ENCODE measurements at regions of chr7 and their contacts with region 1.

Region 1: DNA sequence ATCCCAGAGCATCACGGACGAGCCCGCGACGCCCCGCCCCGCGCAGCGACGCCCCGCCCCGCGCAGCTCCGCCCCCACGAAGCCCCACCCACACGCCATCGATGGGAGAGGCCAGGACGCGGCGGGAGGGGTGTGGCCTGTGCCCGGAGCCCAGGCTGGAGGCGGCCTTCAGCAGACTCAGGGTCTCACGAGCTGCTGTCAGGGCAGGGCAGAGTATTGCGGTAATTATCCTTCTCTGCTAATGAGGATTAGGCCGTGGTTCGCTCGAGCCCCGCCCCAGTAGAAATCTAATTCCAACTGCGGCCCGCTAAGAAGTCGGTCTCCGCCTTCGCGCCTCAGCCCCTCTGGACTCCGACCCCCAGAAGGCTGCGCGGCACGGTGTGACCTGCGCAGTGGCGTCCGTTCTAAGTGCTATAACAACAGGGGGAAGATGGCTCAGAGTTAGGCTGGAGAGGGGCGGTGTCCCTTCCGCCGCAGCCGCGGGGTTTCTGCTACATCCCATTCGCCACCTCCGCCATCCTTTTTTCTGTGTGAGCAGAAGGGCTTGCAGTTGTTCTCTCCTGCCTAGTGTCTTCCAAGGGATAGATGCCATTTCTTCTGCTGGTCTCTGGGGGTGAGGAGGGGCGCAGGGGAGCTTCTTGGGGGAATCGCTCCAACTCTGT is 337 bp upstream of the NT5C3A start:
- DNase-seq: peak; percentile 90
- H3K4me3 Mint-ChIP-seq: peak overlapping the region; percentile 94
- H3K27ac Mint-ChIP-seq: peak overlapping the region; percentile 89
- H3K4me1 Mint-ChIP-seq: peaks cover 35% of the 10 kb centered on the region
- H3K27me3 Mint-ChIP-seq: peaks cover 2% of the 10 kb centered on the region

Region 2: DNA sequence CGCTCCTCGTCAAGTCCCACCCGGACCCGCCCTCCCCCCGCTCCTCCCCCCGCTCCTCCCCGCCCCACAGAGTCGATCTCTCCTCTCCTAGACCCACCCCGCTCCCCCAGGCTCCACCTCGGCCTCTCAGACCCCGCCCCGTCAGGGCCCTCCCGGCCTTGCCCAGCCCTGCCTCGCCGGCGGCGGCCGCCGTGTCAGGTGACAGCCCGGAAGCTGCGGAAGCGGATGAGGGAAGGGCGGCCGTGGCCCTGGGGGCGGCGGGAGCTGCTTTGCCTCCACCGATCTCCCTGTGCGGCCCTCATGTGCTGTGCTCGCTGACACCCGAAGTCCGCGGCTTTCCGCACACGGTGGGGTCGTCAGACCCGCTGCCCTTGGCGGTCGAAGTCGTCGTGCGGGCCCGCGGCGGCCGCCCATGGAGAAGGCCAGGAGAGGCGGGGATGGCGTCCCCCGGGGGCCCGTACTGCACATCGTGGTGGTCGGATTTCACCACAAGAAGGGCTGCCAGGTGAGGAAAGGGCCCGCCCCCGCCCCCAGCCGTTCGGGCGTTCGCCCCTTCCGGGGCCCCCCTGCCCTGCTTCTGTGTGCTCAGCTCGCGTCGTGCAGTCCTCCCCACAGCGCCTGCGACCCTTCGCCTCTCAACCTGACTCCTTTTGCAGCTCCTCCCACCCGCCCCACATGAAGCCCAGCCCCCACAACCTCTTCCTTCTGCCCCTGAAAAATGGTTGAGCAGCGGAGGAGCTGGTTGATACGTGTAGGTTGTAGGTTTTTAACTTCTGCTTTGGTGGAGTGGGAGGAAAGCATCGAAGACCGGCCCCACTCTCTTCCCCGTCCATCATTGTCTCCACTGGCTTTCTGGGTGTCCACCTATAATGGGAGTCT is 567.4 kb before region 1 on chr7 and contains the start of gene AVL9:
- intact Hi-C with region 1: loop called (anchors 1 kb)
- DNase-seq: peak; percentile 99
- H3K4me3 Mint-ChIP-seq: peak within 1 kb of the TSS; percentile 94
- H3K27ac Mint-ChIP-seq: peak within 1 kb of the TSS; percentile 95
- H3K4me1 Mint-ChIP-seq: peaks cover 33% of the 10 kb centered on the region
- H3K27me3 Mint-ChIP-seq: no peaks in the 10 kb centered on the region
- total RNA-seq, gene AVL9: 40.8 and 43.9 TPM in 2 replicates

Region 3: DNA sequence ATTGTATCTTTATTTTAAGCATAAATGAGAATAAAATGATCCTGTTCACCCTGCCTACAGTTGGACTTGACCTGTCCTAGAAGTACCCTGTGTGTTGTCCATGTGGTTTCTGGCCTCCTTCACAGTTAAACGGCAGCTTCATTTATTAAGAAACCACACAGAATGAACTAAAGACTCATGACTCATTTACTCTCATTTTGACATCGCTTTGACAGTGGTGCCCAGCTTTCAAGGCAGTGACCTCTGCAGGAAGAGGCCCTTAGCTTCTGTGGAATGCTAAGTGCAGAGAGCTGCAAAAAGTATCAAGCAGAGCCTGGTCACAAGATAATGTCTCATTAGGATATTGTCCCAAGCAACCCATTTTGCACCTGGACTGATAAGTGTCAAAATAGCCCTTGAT is 474.3 kb before region 1 on chr7:
- intact Hi-C with region 1: loop called (anchors 10 kb)
- DNase-seq: no peak
- H3K4me3 Mint-ChIP-seq: no peak overlapping the region
- H3K27ac Mint-ChIP-seq: peak overlapping the region; percentile 77
- H3K4me1 Mint-ChIP-seq: peaks cover 30% of the 10 kb centered on the region
- H3K27me3 Mint-ChIP-seq: no peaks in the 10 kb centered on the region

Region 4: GRCh38 chr7:33040803-33041516 is 22.0 kb before region 1 on chr7:
- intact Hi-C with region 1: loop called (anchors 1 kb)
- DNase-seq: peak; percentile 62
- H3K4me3 Mint-ChIP-seq: peak overlapping the region; percentile 37
- H3K27ac Mint-ChIP-seq: peak overlapping the region; percentile 56
- H3K4me1 Mint-ChIP-seq: peaks cover 48% of the 10 kb centered on the region
- H3K27me3 Mint-ChIP-seq: no peaks in the 10 kb centered on the region

Region 5: GRCh38 chr7:33128990-33129805 is 66.3 kb after region 1 on chr7 and contains the start of gene BBS9:
- intact Hi-C with region 1: loop called (anchors 1 kb)
- DNase-seq: peak; percentile 89
- H3K4me3 Mint-ChIP-seq: peak within 1 kb of the TSS; percentile 96
- H3K27ac Mint-ChIP-seq: peak within 1 kb of the TSS; percentile 83
- H3K4me1 Mint-ChIP-seq: peaks cover 19% of the 10 kb centered on the region
- H3K27me3 Mint-ChIP-seq: no peaks in the 10 kb centered on the region
- total RNA-seq, gene BBS9: 4.8 and 6.8 TPM in 2 replicates